ENCODE measurements at regions of chr18 and their contacts with region 1.

Region 1: GRCh38 chr18:50967714-50968661 is at the start of gene ELAC1:
- DNase-seq: peak; percentile 95
- H3K4me3 ChIP-seq: peak within 1 kb of the TSS; percentile 77 to 97 (median 94)
- H3K27ac ChIP-seq: peak within 1 kb of the TSS; percentile 95 to 99 (median 98)
- H3K4me1 ChIP-seq: peaks cover 13 to 23% (median 20%) of the 10 kb centered on the region in 4 donors
- H3K27me3 ChIP-seq: no peaks in the 10 kb centered on the region
- CTCF ChIP-seq: peak in 1 of 3 experiments; percentile 14
- EP300 ChIP-seq: no peak
- POLR2A ChIP-seq: peak; percentile 89
- total RNA-seq, gene ELAC1: 3.7 to 7.9 (median 4.0) TPM

Region 2: GRCh38 chr18:50819728-50820378 is 148.1 kb before region 1 on chr18 and contains the start of gene MRO:
- intact Hi-C with region 1: loop called (anchors 5 kb)
- DNase-seq: peak; percentile 96
- H3K4me3 ChIP-seq: peak within 1 kb of the TSS; percentile 40 to 58 (median 42)
- H3K27ac ChIP-seq: peak within 1 kb of the TSS in 3 of 4 donors; percentile 34 to 55 (median 38)
- H3K4me1 ChIP-seq: peaks cover 20 to 35% (median 29%) of the 10 kb centered on the region in 4 donors
- H3K27me3 ChIP-seq: no peaks in the 10 kb centered on the region
- CTCF ChIP-seq: peak in 2 of 3 experiments; percentile 93 to 94
- EP300 ChIP-seq: peak; percentile 70
- POLR2A ChIP-seq: no peak
- total RNA-seq, gene MRO: 0.52 to 1.4 (median 0.83) TPM

Region 3: GRCh38 chr18:50836521-50836957 is 131.4 kb before region 1 on chr18:
- intact Hi-C with region 1: no loop called
- DNase-seq: no peak
- H3K4me3 ChIP-seq: no peak overlapping the region
- H3K27ac ChIP-seq: no peak overlapping the region
- H3K4me1 ChIP-seq: peaks cover 0 to 7% (median 3%) of the 10 kb centered on the region in 4 donors
- H3K27me3 ChIP-seq: no peaks in the 10 kb centered on the region
- CTCF ChIP-seq: no peak
- EP300 ChIP-seq: no peak
- POLR2A ChIP-seq: no peak

Region 4: DNA sequence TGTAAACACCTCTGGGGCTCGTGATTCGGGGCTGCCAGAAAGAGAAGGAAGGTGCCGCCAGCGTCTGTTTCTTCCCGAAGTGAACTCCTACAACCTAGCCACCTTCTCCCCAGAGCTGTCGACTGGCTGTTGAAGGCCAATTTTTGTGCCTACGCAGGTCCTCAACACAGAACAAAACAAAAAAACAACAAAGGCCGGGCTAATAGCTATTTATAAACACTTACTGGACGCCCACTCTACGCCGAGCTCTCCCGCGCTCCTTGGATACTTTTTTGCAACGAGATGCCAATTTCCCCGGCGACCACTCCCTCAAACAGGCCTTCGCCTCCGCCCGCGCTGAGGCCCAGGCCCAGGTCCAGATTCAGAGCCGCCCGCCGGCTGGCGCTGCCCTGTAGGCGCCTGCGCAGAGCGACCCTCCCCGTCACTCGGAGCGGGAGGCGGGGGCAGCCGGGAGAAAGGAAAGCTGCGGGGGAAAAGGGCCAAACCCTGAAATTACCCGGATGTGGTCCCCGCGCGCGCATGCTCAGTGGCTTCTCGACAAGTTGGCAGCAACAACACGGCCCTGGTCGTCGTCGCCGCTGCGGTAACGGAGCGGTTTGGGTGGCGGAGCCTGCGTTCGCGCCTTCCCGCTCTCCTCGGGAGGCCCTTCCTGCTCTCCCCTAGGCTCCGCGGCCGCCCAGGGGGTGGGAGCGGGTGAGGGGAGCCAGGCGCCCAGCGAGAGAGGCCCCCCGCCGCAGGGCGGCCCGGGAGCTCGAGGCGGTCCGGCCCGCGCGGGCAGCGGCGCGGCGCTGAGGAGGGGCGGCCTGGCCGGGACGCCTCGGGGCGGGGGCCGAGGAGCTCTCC is 61.9 kb after region 1 on chr18 and contains the start of gene SMAD4:
- intact Hi-C with region 1: loop called (anchors 2 kb)
- DNase-seq: peak; percentile 99
- H3K4me3 ChIP-seq: peak within 1 kb of the TSS; percentile 60 to 94 (median 82)
- H3K27ac ChIP-seq: peak within 1 kb of the TSS; percentile 96 to 100 (median 98)
- H3K4me1 ChIP-seq: peaks cover 37 to 75% (median 59%) of the 10 kb centered on the region in 4 donors
- H3K27me3 ChIP-seq: no peaks in the 10 kb centered on the region
- CTCF ChIP-seq: no peak
- EP300 ChIP-seq: no peak
- POLR2A ChIP-seq: peak; percentile 62
- total RNA-seq, gene SMAD4: 113 to 168 (median 130) TPM

Region 5: DNA sequence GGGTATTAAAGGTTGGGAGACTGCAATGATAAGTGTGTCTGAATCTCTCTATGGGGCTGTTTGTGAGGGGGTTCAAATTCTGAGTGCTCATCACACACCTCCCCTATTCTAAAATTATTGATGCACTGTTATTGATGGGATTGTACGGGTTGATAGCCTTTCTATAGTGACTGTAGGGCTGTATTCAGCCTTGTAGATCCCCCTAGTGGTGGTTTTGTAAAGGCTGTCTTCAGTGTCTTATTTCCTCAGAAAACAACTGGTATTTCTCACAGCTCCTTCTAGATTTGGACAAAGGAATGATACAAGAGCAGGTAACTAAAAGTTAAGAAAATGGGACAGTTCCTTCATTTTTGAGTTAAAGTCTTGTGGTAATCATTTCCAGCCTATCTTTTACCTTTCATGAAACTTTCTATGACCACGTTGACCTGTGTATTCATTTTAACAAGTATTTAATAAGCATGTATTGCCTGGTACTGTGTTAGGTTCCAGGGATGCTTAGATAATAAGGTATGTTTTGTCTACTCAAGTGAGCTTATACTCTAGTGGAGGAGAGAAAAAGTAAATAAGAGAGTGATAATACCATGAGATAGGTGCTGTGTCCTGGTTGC is 83.2 kb after region 1 on chr18:
- intact Hi-C with region 1: loop called (anchors 5 kb)
- DNase-seq: no peak
- H3K4me3 ChIP-seq: no peak overlapping the region
- H3K27ac ChIP-seq: no peak overlapping the region
- H3K4me1 ChIP-seq: peaks cover 4 to 56% (median 32%) of the 10 kb centered on the region in 4 donors
- H3K27me3 ChIP-seq: no peaks in the 10 kb centered on the region
- CTCF ChIP-seq: peak; percentile 64 to 80 (median 70)
- EP300 ChIP-seq: no peak
- POLR2A ChIP-seq: no peak

Region 6: GRCh38 chr18:51197661-51198424 is 229.9 kb after region 1 on chr18 and contains the start of gene MEX3C:
- intact Hi-C with region 1: loop called (anchors 10 kb)
- DNase-seq: peak; percentile 100
- H3K4me3 ChIP-seq: peak within 1 kb of the TSS; percentile 69 to 91 (median 78)
- H3K27ac ChIP-seq: peak within 1 kb of the TSS; percentile 97 to 99 (median 98)
- H3K4me1 ChIP-seq: peaks cover 21 to 37% (median 34%) of the 10 kb centered on the region in 4 donors
- H3K27me3 ChIP-seq: no peaks in the 10 kb centered on the region
- CTCF ChIP-seq: peak in 2 of 3 experiments; percentile 22 to 36
- EP300 ChIP-seq: no peak
- POLR2A ChIP-seq: no peak
- total RNA-seq, gene MEX3C: 22.8 to 38.0 (median 30.3) TPM

Measured in esophagus muscularis mucosa (tissue), 4 donors.